BJ (cell line): ENCODE measurements at regions of chr11 and their contacts with region 1.

Region 1: GRCh38 chr11:5204787-5205186 is 4.3 kb upstream of the OR51V1 start:
- DNase-seq: peak; percentile 21
- H3K4me3 ChIP-seq: no peak overlapping the region
- H3K27me3 ChIP-seq: no peaks in the 10 kb centered on the region
- CTCF ChIP-seq: peak; percentile 63

Region 2: DNA sequence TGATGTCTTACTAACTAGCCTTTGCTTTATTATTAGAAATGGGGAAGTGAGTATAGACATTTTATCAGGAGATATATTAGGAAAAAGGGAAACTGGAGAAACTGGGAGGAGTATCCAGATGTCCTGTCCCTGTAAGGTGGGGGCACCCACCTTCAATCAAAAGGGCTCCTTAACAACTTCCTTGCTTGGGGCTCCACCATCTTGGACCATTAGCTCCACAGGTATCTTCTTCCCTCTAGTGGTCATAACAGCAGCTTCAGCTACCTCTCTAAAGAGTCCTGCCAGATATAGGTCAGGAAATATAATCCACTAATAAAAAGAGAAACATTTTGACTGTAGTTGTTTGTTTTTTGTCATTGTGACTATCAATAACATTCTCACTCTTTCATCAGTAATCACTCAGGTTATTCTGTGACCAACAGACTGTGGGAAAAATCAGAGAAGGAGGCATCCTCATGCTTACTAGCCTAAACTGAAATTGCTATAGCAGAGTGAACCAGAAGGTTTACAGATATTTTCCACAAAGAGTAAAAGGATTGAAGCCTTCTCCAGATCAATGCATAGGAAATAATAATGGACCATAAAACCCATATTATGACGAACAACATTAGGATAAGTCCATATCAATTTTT is 86.5 kb after region 1 on chr11:
- CTCF ChIA-PET with region 1: interaction called, 20 read pairs
- POLR2A ChIA-PET with region 1: no interaction called
- DNase-seq: no peak
- H3K4me3 ChIP-seq: no peak overlapping the region
- H3K27me3 ChIP-seq: no peaks in the 10 kb centered on the region
- CTCF ChIP-seq: peak; percentile 66

Region 3: DNA sequence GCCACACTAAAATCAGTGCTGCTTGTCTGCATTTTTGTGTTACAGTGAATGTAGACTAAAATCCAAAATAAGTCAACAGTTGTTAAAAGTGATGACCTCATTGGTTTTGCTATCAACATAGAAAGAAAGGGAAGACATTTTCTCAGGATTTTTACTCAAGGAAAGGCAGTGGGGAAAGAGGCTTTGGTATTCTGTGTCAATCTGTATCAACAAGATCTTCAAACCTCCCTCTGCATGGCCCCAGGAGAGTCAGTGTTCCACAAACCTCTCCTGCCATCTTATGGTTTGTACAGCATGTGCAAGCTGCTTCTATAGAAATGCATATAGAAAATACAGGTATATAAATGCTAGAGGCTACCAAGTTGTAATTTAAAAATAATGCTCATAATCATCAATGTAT is 165.0 kb after region 1 on chr11:
- CTCF ChIA-PET with region 1: interaction called, 14 read pairs
- POLR2A ChIA-PET with region 1: no interaction called
- DNase-seq: no peak
- H3K4me3 ChIP-seq: no peak overlapping the region
- H3K27me3 ChIP-seq: no peaks in the 10 kb centered on the region
- CTCF ChIP-seq: peak; percentile 61

Region 4: GRCh38 chr11:5380740-5381342 is 176.1 kb after region 1 on chr11:
- CTCF ChIA-PET with region 1: interaction called, 22 read pairs
- POLR2A ChIA-PET with region 1: no interaction called
- DNase-seq: no peak
- H3K4me3 ChIP-seq: no peak overlapping the region
- H3K27me3 ChIP-seq: no peaks in the 10 kb centered on the region
- CTCF ChIP-seq: peak; percentile 86